GM10248 (cell line): ENCODE measurements at regions of chr6 and their contacts with region 1.

Region 1: GRCh38 chr6:158213925-158214674 is 46.0 kb downstream of the GTF2H5 start:
- DNase-seq: peak; percentile 73
- CTCF ChIP-seq: peak; percentile 83

Region 2: DNA sequence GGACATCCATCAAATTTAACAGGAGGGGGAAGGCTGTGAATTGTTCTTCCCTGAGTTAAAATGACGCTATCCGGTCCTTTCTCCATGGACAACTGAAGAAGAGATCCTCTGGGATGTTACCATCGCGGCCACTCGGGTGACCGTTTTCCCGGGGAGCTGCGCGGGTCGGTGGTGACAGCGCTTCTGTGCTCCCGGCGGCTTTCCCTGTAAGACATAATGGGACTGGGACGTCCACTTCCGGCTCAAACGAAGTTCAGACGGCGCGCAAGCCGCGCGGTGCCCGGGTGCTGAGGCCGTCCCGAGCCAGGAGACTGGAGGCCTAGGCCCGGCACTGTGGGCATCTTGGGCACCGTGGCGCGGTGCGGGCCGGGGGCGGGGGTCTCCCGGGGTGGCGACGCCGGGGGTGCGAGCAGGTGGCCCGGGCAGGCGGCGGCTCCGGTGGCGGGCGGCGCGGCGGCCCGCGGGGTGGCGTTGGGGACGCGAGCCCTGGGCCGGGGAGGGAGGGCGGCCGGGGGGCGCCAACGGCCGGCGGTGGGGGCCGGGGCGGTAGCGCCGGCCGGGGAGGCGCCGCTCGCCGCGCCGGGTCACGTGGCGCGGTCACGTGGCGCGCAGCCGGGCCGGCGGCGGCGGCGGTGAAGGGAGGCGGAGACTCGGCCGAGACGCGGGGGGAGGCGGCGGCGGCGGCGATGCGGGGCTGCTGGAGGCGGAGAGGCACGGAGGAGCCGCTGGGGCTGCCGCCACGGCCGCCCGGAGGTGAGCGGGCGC is 17.6 kb after region 1 on chr6:
- CTCF ChIA-PET with region 1: interaction called, 15 read pairs
- POLR2A ChIA-PET with region 1: no interaction called
- DNase-seq: peak; percentile 92
- CTCF ChIP-seq: no peak

Region 3: DNA sequence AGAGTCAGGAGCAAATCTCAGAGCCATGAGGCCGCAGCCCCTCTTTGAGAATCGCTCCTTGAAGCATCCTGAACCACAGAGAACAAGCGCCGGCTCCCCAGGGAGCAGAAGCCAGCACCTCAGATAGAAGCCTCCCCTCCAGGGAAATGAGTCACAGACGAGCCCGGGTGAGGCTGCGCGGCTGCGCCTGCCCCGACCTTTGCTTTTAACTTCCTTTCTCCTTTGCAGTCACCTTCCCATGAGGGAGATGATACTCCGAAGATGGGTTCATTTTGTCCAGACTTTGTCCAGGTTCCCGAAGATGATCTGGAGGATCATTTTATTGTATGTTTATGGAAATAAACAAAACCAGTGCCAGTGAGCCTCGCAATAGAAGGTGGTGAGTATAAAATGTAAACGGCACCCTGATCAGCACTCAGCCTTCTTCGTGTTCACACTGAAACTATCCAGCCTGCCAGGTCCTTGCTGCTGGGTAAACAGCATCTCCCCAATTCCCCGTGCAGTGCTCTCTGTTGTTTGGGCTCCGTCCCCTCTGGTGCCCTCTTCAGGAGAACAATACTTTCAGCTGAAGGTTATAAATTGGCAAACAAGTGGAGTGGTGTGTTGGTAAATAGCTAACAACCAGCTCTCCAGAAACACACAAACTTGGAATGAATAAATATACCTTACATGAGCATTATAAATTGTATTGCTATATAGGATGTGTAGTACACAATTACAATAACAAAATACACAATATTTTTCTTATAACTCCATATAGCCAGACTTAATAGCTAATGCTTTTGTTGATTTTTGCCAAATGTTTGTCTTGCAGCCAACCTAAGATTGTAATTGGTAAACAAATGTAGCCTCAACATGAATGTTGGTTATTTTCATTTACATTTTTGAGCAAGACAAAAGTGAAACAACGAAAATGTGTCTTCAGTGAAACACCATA is 304.4 kb after region 1 on chr6:
- CTCF ChIA-PET with region 1: interaction called, 22 read pairs
- POLR2A ChIA-PET with region 1: no interaction called
- DNase-seq: peak; percentile 77
- CTCF ChIP-seq: peak; percentile 55

Region 4: GRCh38 chr6:158552055-158552795 is 338.1 kb after region 1 on chr6:
- CTCF ChIA-PET with region 1: interaction called, 11 read pairs
- POLR2A ChIA-PET with region 1: no interaction called
- DNase-seq: no peak
- CTCF ChIP-seq: no peak

Region 5: DNA sequence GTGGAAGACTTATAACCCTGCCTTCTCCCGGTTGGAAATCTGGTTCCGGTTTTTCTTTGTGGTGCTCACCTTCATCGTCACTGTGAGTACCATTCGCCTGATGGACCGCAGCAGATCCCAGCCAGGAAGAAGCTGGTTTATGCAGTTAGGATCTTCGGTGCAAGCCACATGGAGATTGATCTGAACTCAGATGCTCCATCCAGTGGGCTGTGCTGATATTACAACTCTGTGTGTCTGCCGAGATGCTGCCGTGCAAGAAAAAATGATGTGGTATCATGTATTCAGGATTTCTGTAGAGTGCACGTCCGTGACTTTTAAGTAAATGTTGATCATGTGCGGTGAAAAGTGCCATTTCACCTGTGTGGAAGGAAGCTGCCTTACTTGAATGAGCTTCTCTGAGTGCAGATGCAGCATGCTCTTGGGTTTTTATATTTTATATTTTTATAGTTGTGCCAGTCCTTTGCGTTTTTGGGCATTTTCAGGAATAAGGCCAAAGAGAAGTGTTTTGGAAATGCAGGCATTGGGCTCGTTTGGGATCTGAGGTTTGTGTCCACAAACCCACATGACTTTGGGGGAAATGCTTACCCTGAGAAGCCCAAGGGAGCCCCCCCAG is 391.3 kb after region 1 on chr6:
- CTCF ChIA-PET with region 1: interaction called, 41 read pairs
- POLR2A ChIA-PET with region 1: no interaction called
- DNase-seq: peak; percentile 72
- CTCF ChIP-seq: peak; percentile 70

Region 6: DNA sequence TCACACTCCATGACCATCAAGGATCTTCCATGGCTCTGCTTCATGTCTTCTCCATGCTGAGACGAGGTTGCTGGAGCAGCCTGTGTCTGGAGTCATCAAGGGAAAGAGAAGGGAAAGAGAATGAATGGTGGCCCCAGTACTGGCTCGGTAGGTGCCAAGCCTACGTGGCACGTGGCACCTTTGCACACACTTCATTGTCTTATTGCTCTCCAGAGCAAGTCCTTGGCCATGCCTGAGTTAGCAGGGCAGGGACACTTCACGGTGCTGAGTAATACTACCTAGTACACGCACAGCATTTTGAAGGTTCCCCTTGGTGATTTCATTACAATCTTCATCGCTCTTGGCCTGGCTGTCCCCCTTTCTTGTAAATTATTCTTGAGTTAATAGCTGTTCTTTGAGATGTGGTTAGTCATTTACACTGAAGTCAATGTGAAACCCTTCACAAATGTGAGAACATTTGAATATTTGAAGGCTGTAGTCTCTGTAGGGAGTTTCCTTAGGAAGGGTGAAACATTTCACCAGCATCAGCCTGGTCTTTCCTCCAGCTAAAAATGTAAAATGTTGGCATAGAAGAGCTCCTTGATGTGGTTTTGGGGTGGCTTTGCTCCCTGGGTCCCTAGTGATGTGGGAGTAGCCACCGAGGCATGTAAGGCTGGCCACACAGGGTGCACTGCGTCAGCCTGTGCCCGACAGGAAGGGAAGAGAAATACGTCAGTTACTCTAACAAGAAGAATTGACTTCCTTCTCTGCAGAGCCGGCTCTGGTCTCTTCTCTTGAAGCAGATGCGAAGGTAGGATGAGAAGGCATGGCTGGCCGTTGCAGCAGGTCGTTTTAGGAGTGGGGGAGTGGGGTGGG is 435.4 kb after region 1 on chr6 and contains the start of gene SYTL3:
- CTCF ChIA-PET with region 1: interaction called, 25 read pairs
- POLR2A ChIA-PET with region 1: no interaction called
- DNase-seq: peak; percentile 53
- CTCF ChIP-seq: no peak

Region 7: DNA sequence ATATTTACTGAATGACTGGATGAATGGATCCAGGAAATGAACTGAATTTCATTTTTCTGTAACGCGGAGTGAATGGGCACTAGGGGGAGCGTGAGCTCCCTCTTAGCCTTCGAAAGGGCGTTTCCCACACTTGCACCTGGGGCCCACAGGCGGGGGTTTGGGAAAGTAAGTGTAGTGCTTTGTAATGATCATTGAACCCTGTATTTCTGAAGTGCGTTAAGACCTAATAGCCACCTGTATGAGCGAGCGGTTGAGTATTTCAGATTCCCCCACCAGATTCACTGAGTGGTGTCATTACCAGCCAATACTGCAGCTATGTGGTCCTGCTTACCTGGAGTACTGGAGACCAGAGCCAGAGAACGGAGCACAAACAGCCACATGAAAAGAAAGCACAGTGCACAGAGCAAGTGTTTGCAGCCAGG is 446.2 kb after region 1 on chr6:
- CTCF ChIA-PET with region 1: interaction called, 10 read pairs
- POLR2A ChIA-PET with region 1: no interaction called
- DNase-seq: peak; percentile 65
- CTCF ChIP-seq: peak; percentile 58